ENCODE measurements at regions of chr14 and their contacts with region 1.

Region 1: GRCh38 chr14:35285168-35286002 is 6.8 kb upstream of the PSMA6 start:
- DNase-seq: peak; percentile 95
- ATAC-seq: peak; percentile 82
- H3K4me3 ChIP-seq: peak overlapping the region; percentile 51; the same call in 1 of the 2 replicates
- H3K27ac ChIP-seq: peak overlapping the region; percentile 91
- H3K4me1 ChIP-seq: peaks cover 53% of the 10 kb centered on the region
- H3K27me3 ChIP-seq: no peaks in the 10 kb centered on the region
- CTCF ChIP-seq: no peak
- EP300 ChIP-seq: peak; percentile 70 to 73; a peak in 3 of 4 replicates
- POLR2A ChIP-seq: no peak
- RAD21 ChIP-seq: peak; percentile 19; the same call in 1 of the 2 replicates

Region 2: DNA sequence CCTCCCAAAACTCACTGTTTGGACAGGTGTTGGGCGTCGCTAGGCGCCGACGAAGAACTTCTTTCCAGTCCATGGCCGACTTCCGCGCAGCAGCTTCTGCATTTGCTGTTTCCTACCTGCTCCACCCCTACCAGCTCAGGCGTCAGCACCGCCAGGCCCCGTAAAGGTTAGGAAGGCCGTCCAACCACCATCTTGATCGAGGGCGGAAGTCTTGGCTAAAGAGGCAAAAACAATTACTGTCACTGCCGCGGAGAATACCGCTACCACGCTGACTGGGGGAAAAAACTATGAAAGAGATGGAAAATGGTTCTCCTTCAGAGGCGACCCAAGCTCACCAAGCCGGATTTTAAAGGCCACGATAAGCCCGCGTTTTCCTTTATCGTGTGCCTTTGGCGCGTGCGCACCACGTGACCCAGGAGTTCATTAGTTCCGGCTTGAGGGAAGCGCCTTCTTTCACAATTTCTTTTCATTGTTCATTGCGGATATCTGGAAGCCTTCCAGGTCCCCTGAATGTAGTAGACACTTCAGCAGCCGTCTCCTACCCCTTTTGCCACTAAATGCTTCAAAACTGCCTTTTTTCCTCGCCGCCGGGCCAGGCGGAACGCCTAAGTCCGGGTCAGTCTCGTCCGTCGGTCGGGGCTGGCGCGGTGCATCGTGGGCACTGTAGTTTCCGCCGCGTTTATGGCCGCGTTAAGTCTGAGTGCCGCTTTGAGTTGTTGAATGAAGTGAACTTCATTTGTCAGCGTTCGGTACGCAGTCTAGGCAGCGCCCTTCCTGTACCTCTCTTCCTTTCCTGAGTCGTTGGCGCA is 163.3 kb before region 1 on chr14 and contains the starts of genes PPP2R3C and PRORP:
- CTCF ChIA-PET with region 1: interaction called, 3 read pairs
- POLR2A ChIA-PET with region 1: interaction called, 3 read pairs
- RAD21 ChIA-PET with region 1: no interaction called
- SMC1A ChIA-PET with region 1: interaction called, 4 read pairs
- in situ Hi-C with region 1: no loop called
- intact Hi-C with region 1: loop called (anchors 5 kb)
- DNase-seq: peak; percentile 94
- ATAC-seq: peak; percentile 92
- H3K4me3 ChIP-seq: peak within 1 kb of the TSS; percentile 83
- H3K27ac ChIP-seq: peak within 1 kb of the TSS; percentile 99
- H3K4me1 ChIP-seq: 0 out of 2 replicates have a peak, but pooled peaks cover 2% of the 10 kb centered on the region
- H3K27me3 ChIP-seq: no peaks in the 10 kb centered on the region
- CTCF ChIP-seq: no peak
- EP300 ChIP-seq: no peak; a peak in 1 of 4 replicates
- POLR2A ChIP-seq: peak; percentile 75
- RAD21 ChIP-seq: no peak
- polyA plus RNA-seq, gene PPP2R3C: 77.8 to 80.5 TPM
- polyA plus RNA-seq, gene PRORP: 45.2 TPM

Region 3: DNA sequence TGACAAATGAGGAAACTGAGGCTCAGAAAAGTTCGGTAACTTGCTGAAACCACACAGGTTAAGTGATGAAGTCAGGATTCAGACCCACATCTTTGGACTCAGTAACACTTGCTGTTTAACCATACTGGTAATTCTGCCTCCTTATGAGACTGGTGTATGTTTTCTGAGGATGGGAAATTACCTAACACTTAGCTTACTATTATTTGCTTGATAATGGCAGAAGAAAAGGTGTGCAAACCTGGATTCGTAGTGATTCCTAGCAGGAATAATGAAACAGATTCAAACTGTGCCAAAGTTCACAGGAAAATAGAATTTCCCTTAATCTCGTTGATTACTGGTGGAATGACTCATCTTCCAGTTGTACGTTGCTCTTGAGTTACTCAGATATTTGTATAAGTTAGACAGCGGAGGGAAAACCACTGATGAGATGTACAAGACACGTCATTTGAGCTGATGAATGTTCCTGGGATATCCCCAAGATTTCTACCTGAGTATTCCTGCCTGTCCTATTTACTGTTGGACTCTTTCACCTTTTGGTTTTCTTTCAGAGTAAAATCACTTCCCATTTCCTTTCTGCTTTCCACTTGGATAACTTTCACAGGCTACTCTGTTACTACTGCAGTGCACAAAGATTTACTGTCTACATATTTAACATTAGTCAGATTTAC is 125.5 kb before region 1 on chr14:
- CTCF ChIA-PET with region 1: interaction called, 4 read pairs
- POLR2A ChIA-PET with region 1: interaction called, 4 read pairs
- RAD21 ChIA-PET with region 1: interaction called, 10 read pairs
- SMC1A ChIA-PET with region 1: interaction called, 12 read pairs
- in situ Hi-C with region 1: no loop called
- intact Hi-C with region 1: loop called (anchors 5 kb)
- DNase-seq: no peak
- ATAC-seq: peak; percentile 64
- H3K4me3 ChIP-seq: no peak overlapping the region
- H3K27ac ChIP-seq: peak overlapping the region; percentile 45; the same call in 1 of the 2 replicates
- H3K4me1 ChIP-seq: peaks cover 19% of the 10 kb centered on the region
- H3K27me3 ChIP-seq: no peaks in the 10 kb centered on the region
- CTCF ChIP-seq: no peak
- EP300 ChIP-seq: peak in 1 of 2 experiments; percentile 14; a peak in 1 of 4 replicates
- POLR2A ChIP-seq: no peak
- RAD21 ChIP-seq: no peak

Region 4: GRCh38 chr14:35254736-35255135 is 30.6 kb before region 1 on chr14:
- CTCF ChIA-PET with region 1: interaction called, 3 read pairs
- POLR2A ChIA-PET with region 1: no interaction called
- RAD21 ChIA-PET with region 1: interaction called, 4 read pairs
- SMC1A ChIA-PET with region 1: interaction called, 10 read pairs
- in situ Hi-C with region 1: no loop called
- intact Hi-C with region 1: no loop called
- DNase-seq: peak; percentile 64
- ATAC-seq: peak; percentile 90
- H3K4me3 ChIP-seq: no peak overlapping the region
- H3K27ac ChIP-seq: no peak overlapping the region; the same call in 1 of the 2 replicates
- H3K4me1 ChIP-seq: peaks cover 21% of the 10 kb centered on the region
- H3K27me3 ChIP-seq: no peaks in the 10 kb centered on the region
- CTCF ChIP-seq: no peak
- EP300 ChIP-seq: 0 out of 4 replicates have a peak, but pooled peaks of 1 of the 2 experiments have one; percentile 50
- POLR2A ChIP-seq: no peak
- RAD21 ChIP-seq: no peak

Region 5: DNA sequence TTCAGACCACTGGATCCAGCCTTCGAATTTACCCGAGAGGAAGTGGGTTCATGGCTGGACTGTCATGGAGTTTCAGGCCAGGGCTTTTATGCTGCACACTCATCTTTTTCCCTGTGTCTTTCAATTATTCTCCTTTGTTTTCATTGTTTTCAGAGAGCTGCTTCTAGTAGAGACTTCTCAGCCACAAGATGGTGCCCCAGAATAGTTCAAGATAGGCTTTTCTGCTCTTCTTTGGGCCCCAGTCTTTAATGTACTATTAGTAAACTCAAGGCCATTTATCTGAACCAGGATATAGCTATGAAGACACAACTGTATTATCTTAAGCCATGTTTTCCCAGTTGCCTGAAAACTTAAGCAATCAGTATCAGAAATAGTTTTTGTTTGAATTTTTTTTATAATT is 23.6 kb before region 1 on chr14:
- CTCF ChIA-PET with region 1: interaction called, 3 read pairs
- POLR2A ChIA-PET with region 1: no interaction called
- RAD21 ChIA-PET with region 1: interaction called, 3 read pairs
- SMC1A ChIA-PET with region 1: interaction called, 10 read pairs
- in situ Hi-C with region 1: no loop called
- intact Hi-C with region 1: no loop called
- DNase-seq: no peak
- ATAC-seq: peak; percentile 36; the same call in 2 of the 3 replicates
- H3K4me3 ChIP-seq: no peak overlapping the region
- H3K27ac ChIP-seq: no peak overlapping the region
- H3K4me1 ChIP-seq: no peaks in the 10 kb centered on the region
- H3K27me3 ChIP-seq: no peaks in the 10 kb centered on the region
- CTCF ChIP-seq: peak in 1 of 3 experiments; percentile 30; a peak in 1 of 6 replicates
- EP300 ChIP-seq: no peak
- POLR2A ChIP-seq: no peak
- RAD21 ChIP-seq: peak; percentile 50

Region 6: GRCh38 chr14:35301735-35302528 is 16.5 kb after region 1 on chr14:
- CTCF ChIA-PET with region 1: interaction called, 9 read pairs
- POLR2A ChIA-PET with region 1: interaction called, 14 read pairs
- RAD21 ChIA-PET with region 1: interaction called, 3 read pairs
- SMC1A ChIA-PET with region 1: interaction called, 33 read pairs
- in situ Hi-C with region 1: no loop called
- intact Hi-C with region 1: no loop called
- DNase-seq: no peak
- ATAC-seq: peak; percentile 30
- H3K4me3 ChIP-seq: no peak overlapping the region; the same call in 1 of the 2 replicates
- H3K27ac ChIP-seq: peak overlapping the region; percentile 13; the same call in 1 of the 2 replicates
- H3K4me1 ChIP-seq: peaks cover 30% of the 10 kb centered on the region
- H3K27me3 ChIP-seq: no peaks in the 10 kb centered on the region
- CTCF ChIP-seq: no peak
- EP300 ChIP-seq: no peak
- POLR2A ChIP-seq: no peak
- RAD21 ChIP-seq: no peak

Region 7: DNA sequence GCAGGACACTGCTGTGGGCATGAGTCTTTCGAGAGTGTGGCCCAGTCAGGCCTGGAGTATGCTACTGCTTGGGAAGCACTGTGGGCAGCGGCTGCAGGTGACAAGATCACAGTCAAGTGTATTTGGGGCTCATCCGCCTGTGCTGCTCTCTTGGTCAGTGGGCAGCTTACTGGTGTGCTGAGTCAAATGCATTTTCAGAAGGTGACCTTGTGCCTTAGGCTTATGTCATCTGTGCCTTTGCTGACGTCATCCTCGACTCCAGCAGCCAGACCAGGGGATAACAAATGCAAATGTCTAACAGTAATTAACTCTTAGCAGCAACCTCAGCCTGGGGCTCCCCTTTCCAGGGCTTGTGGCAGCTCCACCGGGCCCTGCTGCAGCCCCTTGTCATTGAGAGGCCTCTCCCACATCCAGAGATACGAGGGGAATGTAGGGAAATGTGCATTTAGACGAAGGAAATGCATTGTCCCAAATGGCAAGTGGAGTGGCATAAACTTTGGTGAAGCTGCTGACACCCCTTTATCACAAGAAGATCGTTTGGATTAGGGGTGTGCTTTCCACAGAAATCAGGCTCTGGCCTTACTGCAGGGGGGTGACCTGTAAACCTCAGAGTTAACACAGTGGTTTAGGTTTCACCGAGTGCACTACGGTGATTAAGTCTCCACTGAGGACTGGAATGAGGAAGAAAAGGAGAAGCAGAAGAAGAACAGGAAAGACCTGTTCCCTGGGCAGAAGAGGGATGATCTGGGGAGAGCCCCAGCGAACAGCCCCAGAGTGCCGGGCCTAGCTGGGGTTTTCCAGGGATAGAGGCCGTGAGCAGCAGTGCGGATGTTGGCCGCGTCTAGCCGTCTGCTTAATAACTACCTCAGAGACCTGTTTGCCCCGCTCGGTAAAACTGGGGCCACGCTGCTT is 46.5 kb after region 1 on chr14:
- CTCF ChIA-PET with region 1: no interaction called
- POLR2A ChIA-PET with region 1: no interaction called
- RAD21 ChIA-PET with region 1: interaction called, 4 read pairs
- SMC1A ChIA-PET with region 1: interaction called, 11 read pairs
- in situ Hi-C with region 1: no loop called
- intact Hi-C with region 1: no loop called
- DNase-seq: no peak
- ATAC-seq: peak; percentile 82
- H3K4me3 ChIP-seq: no peak overlapping the region
- H3K27ac ChIP-seq: peak overlapping the region; percentile 24
- H3K4me1 ChIP-seq: peaks cover 27% of the 10 kb centered on the region
- H3K27me3 ChIP-seq: no peaks in the 10 kb centered on the region
- CTCF ChIP-seq: no peak
- EP300 ChIP-seq: peak in 1 of 2 experiments; percentile 45; a peak in 1 of 4 replicates
- POLR2A ChIP-seq: no peak
- RAD21 ChIP-seq: 0 out of 2 replicates have a peak, but pooled peaks have one; percentile 2

Measured in GM12878 (cell line).